Dendritic cell treated with granulocyte-macrophage colony-stimulating factor and Interleukin-4, amounts not matched to agents 40 ng/mL and 50 ng/mL, for 4 days (primary cell): ENCODE measurements at regions of chr1 and their contacts with region 1.

Region 1: DNA sequence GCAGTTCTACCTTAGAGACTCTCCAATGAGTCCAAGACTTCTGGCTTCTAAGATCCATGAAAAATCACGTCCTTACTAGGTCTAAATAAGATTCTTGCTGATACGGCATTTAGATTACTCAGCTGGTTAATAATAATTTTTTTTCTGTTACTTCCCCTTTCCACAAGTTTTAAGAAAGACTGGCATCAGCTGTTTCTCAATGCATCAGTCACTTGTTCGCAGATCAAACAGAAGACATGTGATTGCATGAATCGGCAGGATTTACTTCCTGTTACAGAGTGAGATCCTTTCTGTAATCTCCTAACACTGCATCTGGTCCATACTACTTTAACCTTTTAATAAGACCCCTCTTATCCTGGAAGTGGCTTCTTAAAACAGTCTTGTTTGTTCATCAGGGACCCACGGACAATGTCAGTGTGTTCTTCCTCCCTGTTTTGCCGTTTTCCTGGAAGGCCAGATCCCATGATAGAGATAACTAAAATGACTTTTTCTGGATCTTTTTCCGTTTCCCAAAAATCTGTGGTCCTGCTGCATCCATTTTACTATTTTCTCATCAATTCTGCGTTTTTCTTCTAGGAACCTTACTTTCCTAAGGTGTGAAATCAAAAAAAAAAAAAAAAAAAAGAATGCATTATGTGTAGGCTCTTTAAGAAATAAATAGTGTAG is 6.1 kb downstream of the NPL start:
- H3K4me3 Mint-ChIP-seq: no peak overlapping the region
- H3K27ac Mint-ChIP-seq: peak overlapping the region; percentile 78
- H3K4me1 Mint-ChIP-seq: peaks cover 46% of the 10 kb centered on the region
- H3K27me3 Mint-ChIP-seq: no peaks in the 10 kb centered on the region

Region 2: GRCh38 chr1:182839209-182840065 is 43.7 kb after region 1 on chr1 and contains the start of gene DHX9:
- intact Hi-C with region 1: loop called (anchors 5 kb)
- H3K4me3 Mint-ChIP-seq: peak within 1 kb of the TSS; percentile 89
- H3K27ac Mint-ChIP-seq: peak within 1 kb of the TSS; percentile 88
- H3K4me1 Mint-ChIP-seq: peaks cover 32% of the 10 kb centered on the region
- H3K27me3 Mint-ChIP-seq: no peaks in the 10 kb centered on the region

Region 3: DNA sequence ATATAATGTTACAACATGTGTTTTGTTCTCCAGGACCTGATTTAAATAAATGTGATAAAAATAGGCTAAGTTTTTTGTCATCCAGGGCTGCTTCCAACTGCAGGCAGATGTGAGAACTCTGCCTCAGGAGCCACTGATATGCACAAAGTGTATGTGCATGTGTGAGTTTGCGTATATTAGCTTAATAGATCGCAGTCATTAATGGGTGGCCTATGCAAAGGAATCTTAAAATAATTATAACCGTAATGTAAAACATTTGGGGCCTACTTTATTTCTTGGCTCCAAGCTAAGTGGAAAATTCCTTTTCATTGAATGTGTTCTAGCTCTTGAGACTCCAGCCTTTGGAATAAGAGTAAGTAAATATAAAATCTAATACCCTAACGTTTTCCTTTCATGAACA is 60.2 kb after region 1 on chr1:
- intact Hi-C with region 1: no loop called
- H3K4me3 Mint-ChIP-seq: no peak overlapping the region
- H3K27ac Mint-ChIP-seq: no peak overlapping the region
- H3K4me1 Mint-ChIP-seq: no peaks in the 10 kb centered on the region
- H3K27me3 Mint-ChIP-seq: no peaks in the 10 kb centered on the region